Posterior vena cava (tissue), 2 donors: ENCODE measurements at regions of chr5 and their contacts with region 1.

Region 1: GRCh38 chr5:87069974-87070624 is 197.6 kb upstream of the RASA1 start:
- DNase-seq: no peak

Region 2: GRCh38 chr5:87022415-87022814 is 47.7 kb before region 1 on chr5:
- intact Hi-C with region 1: loop called in 1 of 2 experiments (anchors 2 kb)
- DNase-seq: no peak

Region 3: GRCh38 chr5:87051502-87052113 is 18.5 kb before region 1 on chr5:
- intact Hi-C with region 1: no loop called
- DNase-seq: no peak

Region 4: DNA sequence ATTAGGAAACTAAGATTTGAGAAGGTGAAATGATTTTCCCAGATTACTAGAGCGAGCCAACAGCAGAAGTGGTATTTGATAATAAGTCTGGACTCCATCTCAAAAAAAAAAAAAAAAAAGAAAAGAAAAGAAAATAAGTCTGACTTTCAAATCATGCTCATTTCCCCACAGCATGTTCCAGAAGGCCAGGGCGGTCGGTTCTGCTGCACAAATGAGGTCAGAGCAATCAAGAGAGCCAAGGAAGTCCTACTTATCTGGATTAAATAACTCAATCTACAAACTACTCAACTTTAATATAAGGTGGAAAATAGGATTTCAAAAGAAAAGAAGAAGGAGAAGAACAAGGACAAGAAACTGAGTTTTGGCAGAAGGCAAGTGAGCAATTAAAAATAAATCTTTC is 67.2 kb after region 1 on chr5:
- intact Hi-C with region 1: no loop called
- DNase-seq: peak; percentile 87